ENCODE measurements at regions of chr4 and their contacts with region 1.

Region 1: GRCh38 chr4:117370944-117371684 is 285.7 kb upstream of the TRAM1L1 start:
- DNase-seq: no peak
- ATAC-seq: no peak
- H3K4me3 ChIP-seq: no peak overlapping the region
- H3K27ac ChIP-seq: no peak overlapping the region
- H3K4me1 ChIP-seq: no peaks in the 10 kb centered on the region
- H3K27me3 ChIP-seq: no peaks in the 10 kb centered on the region
- CTCF ChIP-seq: no peak

Region 2: DNA sequence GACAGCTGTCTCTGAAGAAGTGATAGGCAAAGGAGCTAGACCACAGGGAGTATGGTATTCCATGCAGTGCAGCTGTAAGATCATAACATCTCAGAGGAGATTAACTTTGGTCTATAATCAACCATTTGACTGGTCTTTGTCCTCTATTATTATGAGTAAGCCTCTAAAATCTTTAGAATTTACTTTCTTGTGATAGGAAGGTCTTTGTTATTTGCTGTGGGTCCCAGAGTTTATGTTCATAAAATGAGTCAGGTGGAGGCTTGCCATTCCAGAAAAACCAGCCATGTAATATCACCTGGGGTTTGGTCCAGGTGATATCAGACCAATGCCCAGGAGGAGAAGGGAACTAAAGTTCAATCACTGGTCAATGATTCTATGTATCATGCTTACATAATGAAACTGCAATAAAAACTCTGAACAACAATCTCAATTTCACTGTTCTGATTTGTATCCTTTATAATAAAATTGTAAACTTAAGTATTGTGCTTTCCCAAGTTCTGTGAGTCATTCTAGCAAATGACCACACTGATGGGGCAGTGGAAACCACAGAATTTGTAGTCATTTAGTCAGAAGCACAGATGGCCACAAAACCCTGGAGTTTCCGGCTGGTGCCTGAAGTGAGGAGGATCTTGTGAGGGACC is 46.1 kb before region 1 on chr4:
- CTCF ChIA-PET with region 1: no interaction called
- POLR2A ChIA-PET with region 1: no interaction called
- intact Hi-C with region 1: loop called (anchors 1 kb)
- DNase-seq: peak; percentile 93
- ATAC-seq: peak; percentile 90
- H3K4me3 ChIP-seq: peak overlapping the region; percentile 70
- H3K27ac ChIP-seq: peak overlapping the region; percentile 99
- H3K4me1 ChIP-seq: peaks cover 28% of the 10 kb centered on the region
- H3K27me3 ChIP-seq: no peaks in the 10 kb centered on the region
- CTCF ChIP-seq: no peak

Region 3: GRCh38 chr4:118235566-118236120 is 864.5 kb after region 1 on chr4:
- CTCF ChIA-PET with region 1: no interaction called
- POLR2A ChIA-PET with region 1: no interaction called
- intact Hi-C with region 1: no loop called
- DNase-seq: no peak
- ATAC-seq: no peak
- H3K4me3 ChIP-seq: no peak overlapping the region
- H3K27ac ChIP-seq: no peak overlapping the region
- H3K4me1 ChIP-seq: no peaks in the 10 kb centered on the region
- H3K27me3 ChIP-seq: no peaks in the 10 kb centered on the region
- CTCF ChIP-seq: no peak